G401 (cell line): ENCODE measurements at regions of chr6 and their contacts with region 1.

Region 1: GRCh38 chr6:121055572-121056163 is 278.6 kb downstream of the TBC1D32 start:
- DNase-seq: peak; percentile 44

Region 2: GRCh38 chr6:121305957-121306607 is 250.4 kb after region 1 on chr6:
- in situ Hi-C with region 1: loop called (anchors 25 kb)
- DNase-seq: peak; percentile 48